GM10248 (cell line): ENCODE measurements at regions of chr6 and their contacts with region 1.

Region 1: GRCh38 chr6:73732845-73733675 is 37.1 kb downstream of the CD109 start:
- DNase-seq: peak; percentile 67
- CTCF ChIP-seq: peak; percentile 89

Region 2: GRCh38 chr6:73604020-73604419 is 129.0 kb before region 1 on chr6:
- CTCF ChIA-PET with region 1: no interaction called
- POLR2A ChIA-PET with region 1: no interaction called
- DNase-seq: no peak
- CTCF ChIP-seq: no peak

Region 3: DNA sequence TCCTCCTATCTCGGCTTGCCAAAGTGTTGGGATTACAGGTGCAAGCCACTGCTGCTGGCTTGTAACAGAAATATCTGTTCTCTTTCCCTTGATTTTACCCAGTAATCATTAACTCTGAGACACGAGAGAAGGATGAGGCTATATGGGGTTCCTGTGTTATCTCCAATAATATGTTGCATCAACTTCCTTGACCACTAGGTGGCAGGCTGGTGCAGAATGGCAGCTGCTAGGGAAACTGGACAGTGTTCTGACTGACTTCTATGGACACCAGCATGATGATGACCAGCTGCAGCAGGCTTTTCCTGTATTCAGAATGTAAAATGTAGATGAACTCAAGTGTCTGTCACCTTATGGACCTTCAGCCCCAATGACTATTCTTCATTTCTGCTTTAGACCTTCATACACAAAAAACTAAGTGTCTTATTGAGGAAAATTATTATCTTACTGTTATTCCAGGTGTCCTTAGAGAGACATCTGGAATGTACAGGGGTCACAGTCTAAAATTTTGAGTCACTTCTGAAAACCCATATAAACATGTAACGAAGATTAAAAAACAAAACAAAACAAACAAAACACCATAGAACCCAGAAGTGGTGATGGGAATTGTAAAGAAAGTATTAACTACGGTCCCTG is 57.5 kb before region 1 on chr6:
- CTCF ChIA-PET with region 1: interaction called, 154 read pairs
- POLR2A ChIA-PET with region 1: interaction called, 3 read pairs
- DNase-seq: peak; percentile 71
- CTCF ChIP-seq: peak; percentile 87

Region 4: DNA sequence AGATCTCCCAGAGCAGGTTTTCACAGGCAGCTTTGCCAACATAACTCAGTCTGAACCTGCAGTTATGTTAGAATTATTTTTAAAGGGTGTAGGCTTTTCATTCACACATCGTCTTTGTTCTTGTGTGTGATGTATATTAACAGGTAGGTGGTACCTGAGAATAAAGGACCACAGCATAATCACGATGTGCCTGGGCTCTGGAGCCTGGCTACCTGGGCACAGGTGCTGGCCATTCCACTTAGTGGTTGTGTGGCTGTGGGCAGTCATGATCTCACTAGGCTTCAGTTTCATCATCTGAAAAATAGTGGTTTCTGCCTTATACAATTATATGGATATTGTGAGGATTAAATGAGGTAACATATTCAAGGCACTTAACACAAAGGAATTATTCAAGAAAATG is 30.6 kb before region 1 on chr6:
- CTCF ChIA-PET with region 1: interaction called, 14 read pairs
- POLR2A ChIA-PET with region 1: no interaction called
- DNase-seq: no peak
- CTCF ChIP-seq: no peak

Region 5: GRCh38 chr6:73722318-73723060 is 10.6 kb before region 1 on chr6:
- CTCF ChIA-PET with region 1: interaction called, 49 read pairs
- POLR2A ChIA-PET with region 1: no interaction called
- DNase-seq: peak; percentile 27
- CTCF ChIP-seq: no peak

Region 6: GRCh38 chr6:74069089-74069581 is 336.1 kb after region 1 on chr6:
- CTCF ChIA-PET with region 1: no interaction called
- POLR2A ChIA-PET with region 1: no interaction called
- DNase-seq: no peak
- CTCF ChIP-seq: no peak